Right ventricle myocardium inferior (tissue), 1 donor: ENCODE measurements at regions of chr16 and their contacts with region 1.

Region 1: GRCh38 chr16:53323924-53324323 is 110.3 kb upstream of the RBL2 start:
- DNase-seq: no peak
- ATAC-seq: no peak

Region 2: DNA sequence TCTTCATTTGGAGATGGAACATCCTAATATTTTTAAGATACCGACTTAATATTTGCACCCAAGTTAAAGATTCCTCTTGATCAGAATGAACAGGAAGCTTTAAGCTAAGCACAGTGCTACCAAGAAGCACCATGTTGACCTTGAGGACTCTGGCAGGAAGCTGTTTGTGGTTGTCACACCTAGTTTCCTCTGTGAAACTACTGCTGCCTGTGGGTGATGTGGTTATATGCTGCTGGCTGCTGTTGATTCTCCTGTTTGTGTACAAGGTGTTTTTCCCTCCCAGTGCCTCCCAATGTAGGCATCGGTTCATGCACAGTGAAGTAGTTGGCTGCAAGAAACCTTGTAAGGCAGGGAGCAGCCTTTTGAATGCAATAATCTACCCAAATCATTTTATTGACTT is 133.7 kb after region 1 on chr16:
- intact Hi-C with region 1: loop called (anchors 10 kb)
- DNase-seq: no peak
- ATAC-seq: no peak